CD8-positive, alpha-beta T cell (primary cell): ENCODE measurements at regions of chr18 and their contacts with region 1.

Region 1: GRCh38 chr18:63518178-63519012 is 23.8 kb upstream of the SERPINB12 start:
- DNase-seq: peak; percentile 2 to 76 (median 47)
- ATAC-seq: peak; percentile 51
- H3K4me3 ChIP-seq: no peak overlapping the region
- H3K4me3 Mint-ChIP-seq: no peak overlapping the region
- H3K27ac ChIP-seq: no peak overlapping the region
- H3K27ac Mint-ChIP-seq: no peak overlapping the region
- H3K4me1 ChIP-seq: no peaks in the 10 kb centered on the region
- H3K4me1 Mint-ChIP-seq: peaks cover 2% of the 10 kb centered on the region
- H3K27me3 ChIP-seq: no peaks in the 10 kb centered on the region
- H3K27me3 Mint-ChIP-seq: peaks cover 10% of the 10 kb centered on the region
- CTCF ChIP-seq: peak; percentile 68

Region 2: GRCh38 chr18:63495675-63496074 is 22.7 kb before region 1 on chr18:
- CTCF ChIA-PET with region 1: interaction called, 10 read pairs
- POLR2A ChIA-PET with region 1: no interaction called
- intact Hi-C with region 1: no loop called
- DNase-seq: no peak
- ATAC-seq: no peak
- H3K4me3 ChIP-seq: no peak overlapping the region
- H3K4me3 Mint-ChIP-seq: no peak overlapping the region
- H3K27ac ChIP-seq: no peak overlapping the region
- H3K27ac Mint-ChIP-seq: no peak overlapping the region
- H3K4me1 ChIP-seq: no peaks in the 10 kb centered on the region
- H3K4me1 Mint-ChIP-seq: no peaks in the 10 kb centered on the region
- H3K27me3 ChIP-seq: no peaks in the 10 kb centered on the region
- H3K27me3 Mint-ChIP-seq: peaks cover 4% of the 10 kb centered on the region
- CTCF ChIP-seq: no peak

Region 3: DNA sequence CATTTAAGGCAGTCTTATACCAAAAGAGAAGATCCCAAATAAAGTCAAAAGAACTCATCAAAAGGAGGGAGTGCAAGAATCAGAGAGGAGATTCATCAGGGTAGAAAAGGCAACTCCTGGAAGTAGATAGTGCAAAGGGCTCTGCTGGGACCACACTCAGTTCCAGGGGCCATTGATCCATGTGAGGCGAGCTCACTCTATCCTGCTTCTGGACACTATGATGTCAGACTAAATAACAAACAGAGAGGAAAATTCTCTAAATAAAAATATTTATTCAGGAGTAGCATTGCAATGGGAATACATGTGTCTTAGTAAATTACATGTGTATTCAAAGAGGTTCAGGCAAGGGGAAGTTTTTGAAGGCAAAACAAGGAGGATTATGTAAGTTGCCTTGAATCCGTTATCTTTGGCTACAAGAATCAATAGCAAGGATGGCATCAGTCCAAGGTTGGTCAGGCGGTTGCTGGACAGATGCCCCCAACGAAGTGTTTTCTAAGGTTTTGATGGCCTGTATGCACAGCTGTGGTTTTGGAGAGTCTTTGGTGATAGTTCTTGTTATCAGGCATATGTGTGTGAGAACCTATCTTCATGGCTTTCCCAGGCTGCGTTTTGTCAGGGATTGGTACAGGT is 10.6 kb after region 1 on chr18:
- CTCF ChIA-PET with region 1: interaction called, 21 read pairs
- POLR2A ChIA-PET with region 1: no interaction called
- intact Hi-C with region 1: no loop called
- DNase-seq: no peak
- ATAC-seq: no peak
- H3K4me3 ChIP-seq: no peak overlapping the region
- H3K4me3 Mint-ChIP-seq: no peak overlapping the region
- H3K27ac ChIP-seq: no peak overlapping the region
- H3K27ac Mint-ChIP-seq: no peak overlapping the region
- H3K4me1 ChIP-seq: no peaks in the 10 kb centered on the region
- H3K4me1 Mint-ChIP-seq: no peaks in the 10 kb centered on the region
- H3K27me3 ChIP-seq: no peaks in the 10 kb centered on the region
- H3K27me3 Mint-ChIP-seq: peaks cover 17% of the 10 kb centered on the region
- CTCF ChIP-seq: no peak

Region 4: GRCh38 chr18:63559567-63560491 is 41.4 kb after region 1 on chr18:
- CTCF ChIA-PET with region 1: no interaction called
- POLR2A ChIA-PET with region 1: no interaction called
- intact Hi-C with region 1: no loop called
- DNase-seq: no peak
- ATAC-seq: no peak
- H3K4me3 ChIP-seq: no peak overlapping the region
- H3K4me3 Mint-ChIP-seq: no peak overlapping the region
- H3K27ac ChIP-seq: no peak overlapping the region
- H3K27ac Mint-ChIP-seq: no peak overlapping the region
- H3K4me1 ChIP-seq: no peaks in the 10 kb centered on the region
- H3K4me1 Mint-ChIP-seq: no peaks in the 10 kb centered on the region
- H3K27me3 ChIP-seq: no peaks in the 10 kb centered on the region
- H3K27me3 Mint-ChIP-seq: peaks cover 17% of the 10 kb centered on the region
- CTCF ChIP-seq: no peak

Region 5: GRCh38 chr18:63637703-63638102 is 119.3 kb after region 1 on chr18:
- CTCF ChIA-PET with region 1: no interaction called
- POLR2A ChIA-PET with region 1: no interaction called
- intact Hi-C with region 1: no loop called
- DNase-seq: no peak
- ATAC-seq: no peak
- H3K4me3 ChIP-seq: no peak overlapping the region
- H3K4me3 Mint-ChIP-seq: no peak overlapping the region
- H3K27ac ChIP-seq: no peak overlapping the region
- H3K27ac Mint-ChIP-seq: no peak overlapping the region
- H3K4me1 ChIP-seq: no peaks in the 10 kb centered on the region
- H3K4me1 Mint-ChIP-seq: no peaks in the 10 kb centered on the region
- H3K27me3 ChIP-seq: no peaks in the 10 kb centered on the region
- H3K27me3 Mint-ChIP-seq: no peaks in the 10 kb centered on the region
- CTCF ChIP-seq: no peak

Region 6: DNA sequence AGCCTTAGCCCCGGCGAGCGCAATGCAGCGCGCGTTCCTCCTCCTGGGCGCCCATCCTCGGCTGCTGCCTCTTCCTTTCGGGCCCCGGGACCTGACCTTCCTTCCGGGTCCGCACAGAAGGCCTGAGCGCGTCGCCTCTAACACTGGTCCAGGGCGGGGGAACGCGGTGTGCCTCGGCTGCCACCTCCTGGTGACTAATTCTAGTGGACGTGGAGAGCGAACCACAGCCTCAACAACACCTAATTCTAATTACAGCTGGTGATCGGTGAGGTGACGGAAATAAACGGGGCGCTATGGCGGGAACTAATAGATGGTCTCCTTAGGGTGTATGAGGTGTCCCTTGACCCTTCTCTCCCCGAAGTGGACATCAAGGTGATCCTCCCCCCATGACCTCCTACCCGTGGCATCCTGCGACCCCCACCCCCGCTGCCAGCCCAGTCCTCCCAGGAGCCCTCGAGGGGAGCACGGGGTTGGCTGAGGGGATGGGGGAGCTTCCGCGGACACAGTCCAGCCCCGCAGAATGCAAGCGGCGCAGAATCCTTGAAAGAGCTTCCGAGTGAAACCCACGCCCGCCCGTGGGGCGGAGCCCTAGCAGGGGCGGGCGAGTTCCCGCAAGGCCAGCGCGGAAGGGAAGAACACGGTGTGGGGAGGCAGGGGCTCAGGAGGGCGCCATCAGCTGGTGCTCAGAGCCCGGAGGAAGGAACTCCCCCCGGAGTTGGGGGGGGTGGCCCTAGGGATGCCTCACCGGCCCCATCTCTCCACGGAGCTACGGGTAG is 417.9 kb after region 1 on chr18:
- CTCF ChIA-PET with region 1: interaction called, 37 read pairs
- POLR2A ChIA-PET with region 1: no interaction called
- intact Hi-C with region 1: loop called in 1 of 2 experiments (anchors 2 kb)
- DNase-seq: peak in 8 of 9 experiments; percentile 11 to 75 (median 33)
- ATAC-seq: peak; percentile 68
- H3K4me3 ChIP-seq: peak overlapping the region; percentile 60 to 81
- H3K4me3 Mint-ChIP-seq: peak overlapping the region; percentile 69
- H3K27ac ChIP-seq: no peak overlapping the region
- H3K27ac Mint-ChIP-seq: no peak overlapping the region
- H3K4me1 ChIP-seq: peaks cover 10% of the 10 kb centered on the region
- H3K4me1 Mint-ChIP-seq: peaks cover 4% of the 10 kb centered on the region
- H3K27me3 ChIP-seq: peaks cover 0 to 5% of the 10 kb centered on the region in 2 experiments
- H3K27me3 Mint-ChIP-seq: peaks cover 19% of the 10 kb centered on the region
- CTCF ChIP-seq: peak; percentile 25

Region 7: GRCh38 chr18:63994783-63995399 is 476.5 kb after region 1 on chr18:
- CTCF ChIA-PET with region 1: interaction called, 13 read pairs
- POLR2A ChIA-PET with region 1: no interaction called
- intact Hi-C with region 1: loop called in 1 of 2 experiments (anchors 5 kb)
- DNase-seq: peak in 8 of 9 experiments; percentile 7 to 53 (median 40)
- ATAC-seq: peak; percentile 51
- H3K4me3 ChIP-seq: no peak overlapping the region
- H3K4me3 Mint-ChIP-seq: no peak overlapping the region
- H3K27ac ChIP-seq: no peak overlapping the region
- H3K27ac Mint-ChIP-seq: no peak overlapping the region
- H3K4me1 ChIP-seq: no peaks in the 10 kb centered on the region
- H3K4me1 Mint-ChIP-seq: no peaks in the 10 kb centered on the region
- H3K27me3 ChIP-seq: no peaks in the 10 kb centered on the region
- H3K27me3 Mint-ChIP-seq: peaks cover 2% of the 10 kb centered on the region
- CTCF ChIP-seq: peak; percentile 80